ENCODE measurements at regions of chr9 and their contacts with region 1.

Region 1: GRCh38 chr9:129884220-129885017 is 49.2 kb downstream of the USP20 start:
- DNase-seq: peak; percentile 53 to 85 (median 79)
- H3K4me3 ChIP-seq: peak overlapping the region in 57 of 59 donors; percentile 3 to 64 (median 39)
- H3K27ac ChIP-seq: peak overlapping the region in 58 of 59 donors; percentile 6 to 94 (median 88)
- H3K27me3 ChIP-seq: no peaks in the 10 kb centered on the region
- CTCF ChIP-seq: peak in 20 of 56 donors; percentile 0 to 36 (median 10)

Region 2: DNA sequence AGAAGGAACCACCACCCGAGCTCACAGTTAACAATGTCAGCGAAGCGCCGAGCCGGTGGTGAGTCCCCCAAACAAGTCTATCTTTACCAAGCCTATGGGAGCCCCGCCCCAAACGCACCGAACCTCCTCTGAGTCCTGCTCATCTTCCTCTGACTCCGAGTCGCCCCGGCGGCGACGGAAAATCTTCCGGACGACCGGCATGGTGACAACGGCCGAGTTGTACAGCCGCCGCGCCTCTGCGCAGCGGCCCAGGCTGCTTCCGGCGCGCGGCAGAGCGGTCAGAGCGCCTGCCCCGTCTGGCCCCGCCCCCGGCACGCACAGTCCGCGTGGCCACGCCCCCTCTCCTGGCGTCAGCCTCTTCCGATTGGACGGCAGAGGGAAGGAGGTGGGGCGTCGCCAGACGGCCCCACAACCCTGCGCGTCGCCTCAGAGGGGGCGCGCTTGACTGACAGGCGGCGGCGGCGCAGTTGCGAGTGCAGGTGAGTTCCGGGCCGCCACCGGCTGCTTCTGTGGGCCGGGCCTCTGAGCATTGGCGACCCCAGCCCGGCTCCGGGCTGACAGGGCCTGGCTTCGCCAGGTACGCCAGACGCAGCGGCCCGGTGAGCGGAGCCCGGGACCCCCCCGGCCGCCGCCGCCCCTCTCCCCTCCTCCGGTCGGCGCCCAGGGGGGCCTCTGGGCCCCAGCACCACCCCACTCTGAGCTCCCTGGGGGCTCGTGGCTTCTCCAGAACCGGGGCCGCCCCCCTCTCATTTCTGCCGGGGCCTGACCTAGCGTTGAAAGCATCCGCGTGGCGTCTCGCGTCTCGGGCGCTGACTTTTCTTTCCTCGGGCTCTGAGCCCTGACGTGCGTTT is 49.2 kb before region 1 on chr9 and contains the starts of genes C9orf78 and USP20:
- intact Hi-C with region 1: loop called in 1 of 2 experiments (anchors 5 kb)
- DNase-seq: peak; percentile 85 to 99 (median 94)
- H3K4me3 ChIP-seq: peak within 1 kb of the TSS; percentile 70 to 100 (median 96)
- H3K27ac ChIP-seq: peak within 1 kb of the TSS in 54 of 59 donors; percentile 0 to 93 (median 78)
- H3K27me3 ChIP-seq: no peaks in the 10 kb centered on the region
- CTCF ChIP-seq: peak in 32 of 56 donors; percentile 9 to 59 (median 30)
- total RNA-seq, gene C9orf78: 33.2 to 64.4 (median 43.1) TPM
- total RNA-seq, gene USP20: 44.3 to 74.1 (median 56.9) TPM

Region 3: GRCh38 chr9:129910628-129911567 is 26.5 kb after region 1 on chr9:
- intact Hi-C with region 1: no loop called
- DNase-seq: no peak
- H3K4me3 ChIP-seq: no peak overlapping the region
- H3K27ac ChIP-seq: peak overlapping the region in 8 of 59 donors; percentile 2 to 36 (median 20)
- H3K27me3 ChIP-seq: no peaks in the 10 kb centered on the region
- CTCF ChIP-seq: no peak

Region 4: DNA sequence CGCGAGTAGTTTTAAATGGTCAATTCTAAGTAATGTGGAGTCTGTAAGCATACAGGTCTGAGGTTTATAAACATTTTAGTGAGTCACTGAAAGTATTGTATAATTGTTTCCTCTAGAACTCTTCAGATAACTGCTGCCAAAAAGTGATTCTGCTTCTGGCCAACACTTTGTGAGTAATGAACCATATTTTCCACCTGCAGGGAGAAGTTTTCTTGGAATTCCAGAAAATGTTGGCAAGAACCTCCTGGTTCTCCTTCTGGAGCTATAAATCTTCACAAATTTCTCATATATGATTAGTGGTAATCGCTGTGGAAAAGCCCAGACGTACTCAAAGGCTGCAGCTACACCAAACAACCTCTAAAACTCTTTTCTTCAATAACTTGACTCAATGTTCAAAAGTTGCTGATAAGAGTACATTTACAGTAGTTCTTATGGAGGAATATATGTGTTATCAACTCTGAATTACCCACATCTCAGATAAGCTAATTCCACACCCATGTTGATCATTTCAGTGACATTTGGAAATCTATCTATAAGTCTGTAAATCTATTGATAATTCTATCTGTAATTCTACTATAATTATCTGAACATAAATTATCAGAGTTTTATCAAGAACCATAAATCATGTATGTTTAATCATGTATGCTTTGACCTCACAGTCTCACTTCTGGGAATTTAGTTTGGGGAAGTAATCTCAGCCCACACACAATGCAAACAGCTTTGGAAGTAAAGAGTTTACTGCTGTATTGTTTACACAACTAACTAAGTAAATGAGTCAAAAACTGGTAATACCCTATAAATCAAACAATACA is 84.5 kb after region 1 on chr9:
- intact Hi-C with region 1: loop called in 1 of 2 experiments (anchors 5 kb)
- DNase-seq: no peak
- H3K4me3 ChIP-seq: no peak overlapping the region
- H3K27ac ChIP-seq: peak overlapping the region in 52 of 59 donors; percentile 1 to 99 (median 53)
- H3K27me3 ChIP-seq: no peaks in the 10 kb centered on the region
- CTCF ChIP-seq: no peak

Region 5: DNA sequence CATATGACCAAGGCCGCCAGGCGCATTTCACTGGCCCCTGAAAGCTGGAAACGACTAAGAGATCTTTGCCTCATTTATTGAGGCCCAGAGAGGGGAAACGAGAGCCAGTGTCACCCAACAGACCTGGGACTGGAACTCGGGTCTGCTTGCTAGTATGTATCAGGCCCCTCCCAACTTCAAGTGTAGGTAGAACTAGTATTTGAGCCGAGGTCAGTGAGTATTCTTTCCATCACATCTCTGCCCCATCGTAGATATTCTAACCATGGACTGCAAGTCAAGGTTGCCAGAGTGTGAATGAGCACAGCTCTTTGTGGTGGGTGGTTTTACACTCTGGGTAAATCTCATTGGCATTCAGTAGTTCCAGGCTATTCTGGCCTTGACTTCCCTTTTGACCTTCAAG is 211.5 kb after region 1 on chr9:
- intact Hi-C with region 1: loop called (anchors 5 kb)
- DNase-seq: no peak
- H3K4me3 ChIP-seq: no peak overlapping the region
- H3K27ac ChIP-seq: no peak overlapping the region
- H3K27me3 ChIP-seq: no peaks in the 10 kb centered on the region
- CTCF ChIP-seq: no peak

Region 6: GRCh38 chr9:130235897-130236668 is 351.7 kb after region 1 on chr9:
- intact Hi-C with region 1: loop called (anchors 5 kb)
- DNase-seq: peak in 9 of 10 donors; percentile 61 to 81 (median 68)
- H3K4me3 ChIP-seq: peak overlapping the region in 36 of 59 donors; percentile 1 to 47 (median 34)
- H3K27ac ChIP-seq: peak overlapping the region in 55 of 59 donors; percentile 3 to 90 (median 73)
- H3K27me3 ChIP-seq: no peaks in the 10 kb centered on the region
- CTCF ChIP-seq: peak; percentile 97 to 100 (median 99)

Measured in dorsolateral prefrontal cortex (tissue), 120 donors.